ENCODE measurements at regions of chr11 and their contacts with region 1.

Region 1: GRCh38 chr11:75004215-75004614 is 15.5 kb downstream of the NEU3 start:
- DNase-seq: no peak
- ATAC-seq: no peak
- H3K4me3 Mint-ChIP-seq: no peak overlapping the region
- H3K27ac Mint-ChIP-seq: no peak overlapping the region
- H3K4me1 Mint-ChIP-seq: peaks cover 5% of the 10 kb centered on the region
- H3K27me3 Mint-ChIP-seq: no peaks in the 10 kb centered on the region

Region 2: GRCh38 chr11:75022759-75023396 is 18.7 kb after region 1 on chr11:
- CTCF ChIA-PET with region 1: interaction called, 14 read pairs
- POLR2A ChIA-PET with region 1: no interaction called
- DNase-seq: peak; percentile 81
- ATAC-seq: peak; percentile 90
- H3K4me3 Mint-ChIP-seq: no peak overlapping the region
- H3K27ac Mint-ChIP-seq: no peak overlapping the region
- H3K4me1 Mint-ChIP-seq: no peaks in the 10 kb centered on the region
- H3K27me3 Mint-ChIP-seq: no peaks in the 10 kb centered on the region

Region 3: GRCh38 chr11:75073459-75074190 is 69.4 kb after region 1 on chr11:
- CTCF ChIA-PET with region 1: no interaction called
- POLR2A ChIA-PET with region 1: no interaction called
- DNase-seq: no peak
- ATAC-seq: no peak
- H3K4me3 Mint-ChIP-seq: no peak overlapping the region
- H3K27ac Mint-ChIP-seq: no peak overlapping the region
- H3K4me1 Mint-ChIP-seq: no peaks in the 10 kb centered on the region
- H3K27me3 Mint-ChIP-seq: peaks cover 30% of the 10 kb centered on the region

Measured in activated CD8-positive, alpha-beta T cell treated with anti-CD3 and anti-CD28 coated beads, Interleukin-2, amount 10 ng/mL, durations not matched to agents 7 days and 5 days (primary cell).